ENCODE measurements at regions of chr1 and their contacts with region 1.

Region 1: GRCh38 chr1:27300341-27301051 is 21.5 kb upstream of the TMEM222 start:
- DNase-seq: peak; percentile 90
- H3K4me3 ChIP-seq: peak overlapping the region; percentile 12 to 14; a peak in 2 of 4 replicates
- H3K27ac ChIP-seq: peak overlapping the region; percentile 92 to 99
- H3K4me1 ChIP-seq: peaks cover 28 to 52% of the 10 kb centered on the region in 2 experiments
- H3K27me3 ChIP-seq: no peaks in the 10 kb centered on the region
- CTCF ChIP-seq: peak; percentile 92
- EP300 ChIP-seq: peak; percentile 40 to 70; a peak in 3 of 4 replicates
- RAD21 ChIP-seq: peak; percentile 96

Region 2: GRCh38 chr1:26553942-26554682 is 746.4 kb before region 1 on chr1:
- CTCF ChIA-PET with region 1: no interaction called
- POLR2A ChIA-PET with region 1: no interaction called
- DNase-seq: no peak
- H3K4me3 ChIP-seq: no peak overlapping the region
- H3K27ac ChIP-seq: no peak overlapping the region
- H3K4me1 ChIP-seq: no peaks in the 10 kb centered on the region; a peak in 1 of 4 replicates
- H3K27me3 ChIP-seq: no peaks in the 10 kb centered on the region
- CTCF ChIP-seq: no peak
- EP300 ChIP-seq: no peak
- RAD21 ChIP-seq: no peak

Region 3: DNA sequence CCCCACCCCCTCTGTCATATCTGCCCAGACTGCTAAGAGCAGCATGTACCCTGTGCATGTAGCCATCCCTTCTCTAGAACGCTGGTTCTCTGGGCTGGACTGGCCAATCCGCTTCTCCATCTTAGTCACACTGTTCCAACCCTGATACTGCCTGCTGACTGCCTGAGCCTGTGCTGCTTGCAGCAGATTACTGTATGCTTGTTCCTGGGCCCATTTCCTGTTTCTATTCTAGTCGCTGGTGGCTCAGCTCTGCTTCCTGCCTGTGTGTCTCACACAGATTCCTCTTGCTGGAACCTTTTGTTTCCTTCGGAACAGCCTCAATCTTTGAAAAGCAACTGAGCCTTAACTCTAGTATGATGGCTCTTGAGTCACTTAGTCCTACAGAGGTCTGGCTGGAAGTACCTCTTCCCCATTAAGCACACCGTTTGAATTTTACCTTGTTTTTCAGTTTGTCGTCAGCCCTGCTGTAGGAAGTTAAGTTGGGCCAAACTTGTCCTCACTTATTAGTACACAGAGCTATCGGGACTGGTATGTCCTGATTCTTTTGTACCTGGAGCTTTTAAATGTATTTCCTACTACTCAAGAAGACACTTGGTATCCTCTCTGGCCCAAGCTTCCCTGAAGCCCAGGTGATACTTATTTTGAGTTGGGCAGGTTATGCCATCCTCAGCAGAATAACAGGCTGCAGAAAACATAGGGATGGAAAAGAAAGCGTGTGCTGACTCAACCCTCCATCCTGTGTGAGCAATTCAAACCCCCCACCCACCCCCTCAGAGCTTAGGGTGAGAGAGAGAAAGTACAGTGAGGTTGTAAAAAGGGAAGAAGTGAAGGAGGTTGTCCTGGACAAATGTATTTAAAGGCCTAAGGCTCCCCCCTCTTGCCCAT is 556.2 kb before region 1 on chr1:
- CTCF ChIA-PET with region 1: no interaction called
- POLR2A ChIA-PET with region 1: no interaction called
- DNase-seq: peak; percentile 34
- H3K4me3 ChIP-seq: peak overlapping the region in 1 of 2 experiments; percentile 20; a peak in 1 of 4 replicates
- H3K27ac ChIP-seq: peak overlapping the region; percentile 83 to 90
- H3K4me1 ChIP-seq: peaks cover 15 to 26% of the 10 kb centered on the region in 2 experiments; a peak in 3 of 4 replicates
- H3K27me3 ChIP-seq: no peaks in the 10 kb centered on the region
- CTCF ChIP-seq: no peak
- EP300 ChIP-seq: no peak; a peak in 1 of 4 replicates
- RAD21 ChIP-seq: peak; percentile 11; the same call in 1 of the 2 replicates

Region 4: GRCh38 chr1:26949926-26950319 is 350.6 kb before region 1 on chr1:
- CTCF ChIA-PET with region 1: no interaction called
- POLR2A ChIA-PET with region 1: no interaction called
- DNase-seq: no peak
- H3K4me3 ChIP-seq: no peak overlapping the region
- H3K27ac ChIP-seq: no peak overlapping the region
- H3K4me1 ChIP-seq: peaks cover 0 to 3% of the 10 kb centered on the region in 2 experiments; a peak in 1 of 4 replicates
- H3K27me3 ChIP-seq: no peaks in the 10 kb centered on the region
- CTCF ChIP-seq: no peak
- EP300 ChIP-seq: no peak
- RAD21 ChIP-seq: no peak

Region 5: DNA sequence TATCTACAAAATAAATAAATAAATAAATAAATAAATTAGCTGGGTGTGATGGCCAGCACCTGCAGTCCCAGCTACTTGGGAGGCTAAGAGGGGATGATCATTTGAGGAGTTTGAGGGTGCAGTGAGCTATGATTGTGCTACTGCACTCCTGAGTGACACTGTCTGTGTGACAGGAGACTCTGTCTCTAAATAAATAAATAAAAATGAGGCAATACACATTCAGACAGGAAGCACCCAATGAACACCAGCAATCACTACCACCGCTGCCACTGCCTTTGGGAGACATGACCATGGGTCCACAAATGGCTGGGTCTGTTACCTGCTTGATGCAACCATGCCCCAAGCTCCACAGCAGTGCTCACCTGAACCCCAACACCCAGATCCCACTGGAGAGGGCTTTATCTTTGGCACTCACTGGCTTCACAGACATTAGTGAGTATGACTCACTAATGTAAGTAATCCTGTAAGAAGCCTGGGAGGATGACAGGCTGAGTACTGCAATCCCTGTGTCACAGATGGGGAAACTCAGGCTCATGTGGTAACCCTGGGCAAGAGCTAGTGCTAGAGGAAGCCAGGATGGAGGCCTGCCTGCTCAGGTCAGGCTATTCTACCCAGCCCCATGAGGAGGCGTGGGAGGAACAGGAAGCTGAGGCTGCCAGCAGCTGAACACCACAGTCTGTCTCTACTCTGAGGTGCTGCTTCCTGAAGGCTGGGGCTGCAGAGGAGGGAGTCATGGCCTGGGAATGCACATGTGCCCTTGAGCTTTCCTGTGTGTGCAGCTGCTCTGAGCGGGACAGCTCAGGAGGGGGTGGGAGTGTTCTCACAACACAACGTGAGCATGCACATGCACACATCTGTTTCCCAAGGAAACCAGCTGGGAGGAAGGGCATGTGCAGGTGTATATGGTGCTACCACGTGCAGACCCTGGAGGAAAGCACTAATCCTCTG is 188.6 kb before region 1 on chr1:
- CTCF ChIA-PET with region 1: interaction called, 19 read pairs
- POLR2A ChIA-PET with region 1: no interaction called
- DNase-seq: peak; percentile 63
- H3K4me3 ChIP-seq: no peak overlapping the region
- H3K27ac ChIP-seq: peak overlapping the region; percentile 34 to 83
- H3K4me1 ChIP-seq: peaks cover 9 to 17% of the 10 kb centered on the region in 2 experiments; a peak in 3 of 4 replicates
- H3K27me3 ChIP-seq: no peaks in the 10 kb centered on the region
- CTCF ChIP-seq: peak; percentile 54
- EP300 ChIP-seq: peak in 1 of 2 experiments; percentile 47; a peak in 1 of 4 replicates
- RAD21 ChIP-seq: peak; percentile 70

Region 6: DNA sequence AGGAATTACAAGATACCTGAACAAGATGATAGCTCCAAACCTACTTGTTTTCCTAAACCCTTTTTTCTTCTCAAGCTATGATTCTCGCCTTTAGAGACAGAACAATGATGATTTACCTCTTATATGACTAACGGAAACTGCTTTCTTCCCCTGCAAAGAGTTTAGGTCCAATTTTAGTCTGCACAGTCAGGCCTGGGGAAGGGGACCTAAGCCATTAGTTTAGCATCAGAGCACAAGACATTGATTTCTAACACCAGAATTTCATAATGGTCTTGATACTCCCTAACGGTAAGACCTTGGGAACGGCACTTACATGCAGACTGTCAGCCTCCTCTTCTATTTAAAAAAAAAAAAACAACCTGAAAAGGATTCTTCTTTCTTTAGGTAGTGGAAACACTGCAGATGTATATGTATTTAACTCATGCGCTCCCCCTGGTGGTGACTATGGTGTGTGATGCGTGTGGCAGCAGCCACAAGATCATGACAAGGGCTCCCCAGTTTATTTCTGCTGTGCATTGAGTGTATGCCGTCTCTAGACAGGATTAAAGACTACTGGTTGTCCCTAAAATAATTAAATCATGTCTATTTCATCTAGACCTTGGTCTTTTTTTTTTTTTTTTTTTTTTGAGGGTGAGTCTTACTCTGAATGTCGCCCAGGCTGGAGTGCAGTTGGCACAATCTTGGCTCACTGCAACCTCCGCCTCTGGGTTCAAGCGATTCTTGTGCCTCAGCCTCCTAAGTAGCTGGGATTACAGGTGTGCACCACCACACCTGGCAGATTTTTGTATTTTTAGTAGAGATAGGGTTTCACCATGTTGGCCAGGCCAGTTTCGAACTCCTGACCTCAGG is 15.8 kb before region 1 on chr1:
- CTCF ChIA-PET with region 1: interaction called, 142 read pairs
- POLR2A ChIA-PET with region 1: no interaction called
- DNase-seq: peak; percentile 84
- H3K4me3 ChIP-seq: no peak overlapping the region; a peak in 1 of 4 replicates
- H3K27ac ChIP-seq: no peak overlapping the region
- H3K4me1 ChIP-seq: no peaks in the 10 kb centered on the region
- H3K27me3 ChIP-seq: no peaks in the 10 kb centered on the region
- CTCF ChIP-seq: peak; percentile 90
- EP300 ChIP-seq: no peak
- RAD21 ChIP-seq: peak; percentile 80

Region 7: GRCh38 chr1:27357281-27358037 is 57.0 kb after region 1 on chr1:
- CTCF ChIA-PET with region 1: interaction called, 219 read pairs
- POLR2A ChIA-PET with region 1: no interaction called
- DNase-seq: peak; percentile 97
- H3K4me3 ChIP-seq: peak overlapping the region in 1 of 2 experiments; percentile 48; a peak in 1 of 4 replicates
- H3K27ac ChIP-seq: no peak overlapping the region
- H3K4me1 ChIP-seq: peaks cover 0 to 5% of the 10 kb centered on the region in 2 experiments; a peak in 1 of 4 replicates
- H3K27me3 ChIP-seq: no peaks in the 10 kb centered on the region
- CTCF ChIP-seq: peak; percentile 89
- EP300 ChIP-seq: no peak
- RAD21 ChIP-seq: peak; percentile 65

Region 8: GRCh38 chr1:27383039-27383605 is 82.6 kb after region 1 on chr1 and contains the start of gene CD164L2:
- CTCF ChIA-PET with region 1: interaction called, 731 read pairs
- POLR2A ChIA-PET with region 1: interaction called, 5 read pairs
- DNase-seq: peak; percentile 70
- H3K4me3 ChIP-seq: no peak within 1 kb of the TSS
- H3K27ac ChIP-seq: no peak within 1 kb of the TSS
- H3K4me1 ChIP-seq: peaks cover 0 to 10% of the 10 kb centered on the region in 2 experiments; a peak in 1 of 4 replicates
- H3K27me3 ChIP-seq: no peaks in the 10 kb centered on the region
- CTCF ChIP-seq: no peak
- EP300 ChIP-seq: no peak
- RAD21 ChIP-seq: no peak
- polyA plus RNA-seq, gene CD164L2: 0.05 TPM in 2 replicates